PC-9 (cell line): ENCODE measurements at regions of chr2 and their contacts with region 1.

Region 1: GRCh38 chr2:177332041-177332991 is 60.3 kb upstream of the AGPS start:
- DNase-seq: peak; percentile 58
- H3K4me3 ChIP-seq: no peak overlapping the region
- H3K27ac ChIP-seq: no peak overlapping the region
- H3K4me1 ChIP-seq: peaks cover 10% of the 10 kb centered on the region
- H3K27me3 ChIP-seq: no peaks in the 10 kb centered on the region
- CTCF ChIP-seq: peak; percentile 87

Region 2: DNA sequence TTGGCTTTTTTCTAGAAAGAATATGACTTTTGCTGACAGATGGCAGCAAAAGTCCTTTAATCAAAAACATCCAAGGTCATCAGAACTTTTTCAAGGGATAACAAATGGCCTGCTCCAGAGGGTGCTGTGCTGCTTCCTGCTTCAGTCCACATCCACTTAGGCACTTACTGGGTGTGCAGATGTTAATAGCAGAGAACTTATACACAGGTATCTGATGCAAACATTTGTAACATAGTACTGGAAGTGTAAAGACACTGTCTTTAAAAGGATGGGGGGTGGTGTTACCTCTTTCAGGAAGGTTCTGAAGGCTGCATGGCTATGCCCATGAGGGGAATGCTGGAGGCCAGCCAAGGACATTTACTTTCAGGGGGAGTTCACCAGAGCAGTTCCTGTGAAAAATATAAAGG is 1197.3 kb before region 1 on chr2:
- CTCF ChIA-PET with region 1: interaction called, 20 read pairs
- POLR2A ChIA-PET with region 1: interaction called, 5 read pairs
- intact Hi-C with region 1: no loop called
- DNase-seq: no peak
- H3K4me3 ChIP-seq: no peak overlapping the region
- H3K27ac ChIP-seq: no peak overlapping the region
- H3K4me1 ChIP-seq: no peaks in the 10 kb centered on the region
- H3K27me3 ChIP-seq: peaks cover 21% of the 10 kb centered on the region
- CTCF ChIP-seq: no peak; the same call in 1 of the 2 replicates

Region 3: DNA sequence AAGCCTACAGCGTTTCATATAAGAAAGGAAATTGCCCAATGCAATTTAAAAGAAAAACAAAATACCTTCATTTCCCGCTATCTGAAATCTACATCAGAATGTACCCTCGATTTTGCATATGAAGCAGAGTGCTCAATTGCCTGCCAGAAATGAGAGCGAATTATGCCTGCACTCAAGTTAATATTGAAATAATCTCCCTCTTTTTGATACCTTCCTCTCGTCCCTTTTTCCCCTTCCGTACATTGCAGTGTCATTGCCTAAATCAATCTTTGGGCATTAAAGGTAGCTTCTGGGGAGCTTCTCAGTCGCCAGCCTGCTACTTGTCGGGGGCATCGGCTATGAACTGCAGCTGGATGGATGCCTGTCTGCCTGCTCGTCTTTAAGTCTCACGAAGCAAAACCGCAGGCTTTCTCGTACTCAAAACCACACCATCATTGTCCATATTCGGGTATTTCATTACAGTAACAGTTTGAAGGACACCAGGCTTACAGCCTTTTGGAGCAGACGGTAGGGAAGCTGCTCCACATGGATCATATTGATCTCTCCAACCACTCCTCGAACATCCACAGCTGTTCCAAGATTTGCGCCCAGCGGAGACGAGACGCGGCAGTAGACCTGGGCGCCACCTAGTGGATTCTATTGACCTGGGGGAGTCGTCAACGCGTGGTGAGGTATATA is 183.7 kb before region 1 on chr2:
- CTCF ChIA-PET with region 1: interaction called, 6 read pairs
- POLR2A ChIA-PET with region 1: no interaction called
- intact Hi-C with region 1: loop called (anchors 5 kb)
- DNase-seq: peak; percentile 76 to 86
- H3K4me3 ChIP-seq: peak overlapping the region; percentile 46
- H3K27ac ChIP-seq: no peak overlapping the region
- H3K4me1 ChIP-seq: peaks cover 8% of the 10 kb centered on the region
- H3K27me3 ChIP-seq: peaks cover 13% of the 10 kb centered on the region
- CTCF ChIP-seq: peak; percentile 97

Region 4: DNA sequence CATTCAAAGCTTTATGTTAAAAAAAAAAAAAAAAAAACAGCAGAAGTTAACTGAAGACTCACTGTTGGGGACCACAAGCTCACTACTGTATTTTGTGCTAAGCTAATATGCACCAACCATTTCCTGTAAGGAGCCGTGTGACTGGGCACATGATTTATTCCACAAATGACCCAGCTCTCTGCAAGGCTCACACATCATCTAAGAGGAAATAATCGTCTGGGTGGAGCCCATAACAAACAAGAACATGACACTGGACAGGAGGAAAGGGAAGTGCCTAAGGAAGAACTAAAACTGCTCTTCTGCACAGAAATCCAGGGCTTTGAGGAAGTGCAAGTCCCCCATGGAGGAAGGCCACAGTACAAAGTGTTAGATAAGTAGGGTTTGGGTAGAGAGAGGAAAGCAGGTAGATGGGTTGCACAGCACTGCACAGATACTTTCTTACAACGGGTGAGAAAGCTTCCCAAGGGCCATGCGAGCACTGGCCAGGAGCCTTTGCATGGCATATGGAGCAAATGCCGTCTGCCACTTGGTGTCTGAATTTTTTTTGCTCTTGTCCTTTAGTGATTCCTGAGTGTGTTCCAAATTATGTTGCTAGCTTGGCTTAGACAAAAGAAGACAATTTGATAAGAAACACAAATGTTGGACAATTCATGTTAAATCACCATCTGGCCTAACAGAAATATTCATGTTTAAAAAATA is 92.2 kb before region 1 on chr2:
- CTCF ChIA-PET with region 1: no interaction called
- POLR2A ChIA-PET with region 1: no interaction called
- intact Hi-C with region 1: loop called (anchors 5 kb)
- DNase-seq: peak in 1 of 2 experiments; percentile 47
- H3K4me3 ChIP-seq: no peak overlapping the region
- H3K27ac ChIP-seq: peak overlapping the region; percentile 97
- H3K4me1 ChIP-seq: peaks cover 56% of the 10 kb centered on the region
- H3K27me3 ChIP-seq: no peaks in the 10 kb centered on the region
- CTCF ChIP-seq: no peak

Region 5: DNA sequence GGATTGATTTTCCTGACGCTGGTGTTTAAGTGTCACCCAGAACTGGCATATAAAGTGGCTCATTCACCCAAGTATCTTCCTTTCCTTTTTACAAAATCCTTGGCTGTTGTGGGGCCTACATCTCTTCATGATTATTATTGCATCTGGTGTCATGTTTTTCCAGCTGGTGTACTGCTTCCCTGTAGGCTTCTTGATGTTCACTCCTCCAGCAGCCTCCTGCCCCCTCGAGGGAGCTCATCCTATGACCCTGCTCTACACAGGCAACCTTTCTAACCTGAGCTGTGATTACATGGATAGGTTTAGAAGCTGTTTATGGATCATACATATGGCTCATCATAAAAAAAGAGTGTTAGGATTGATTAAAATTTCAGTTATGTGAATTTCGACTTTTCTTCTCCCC is 47.9 kb after region 1 on chr2:
- CTCF ChIA-PET with region 1: no interaction called
- POLR2A ChIA-PET with region 1: no interaction called
- intact Hi-C with region 1: no loop called
- DNase-seq: no peak
- H3K4me3 ChIP-seq: no peak overlapping the region
- H3K27ac ChIP-seq: no peak overlapping the region
- H3K4me1 ChIP-seq: no peaks in the 10 kb centered on the region
- H3K27me3 ChIP-seq: no peaks in the 10 kb centered on the region
- CTCF ChIP-seq: no peak

Region 6: GRCh38 chr2:177489719-177490301 is 157.5 kb after region 1 on chr2:
- CTCF ChIA-PET with region 1: no interaction called
- POLR2A ChIA-PET with region 1: no interaction called
- intact Hi-C with region 1: loop called (anchors 5 kb)
- DNase-seq: no peak
- H3K4me3 ChIP-seq: no peak overlapping the region
- H3K27ac ChIP-seq: no peak overlapping the region
- H3K4me1 ChIP-seq: no peaks in the 10 kb centered on the region
- H3K27me3 ChIP-seq: no peaks in the 10 kb centered on the region
- CTCF ChIP-seq: peak; percentile 88

Region 7: DNA sequence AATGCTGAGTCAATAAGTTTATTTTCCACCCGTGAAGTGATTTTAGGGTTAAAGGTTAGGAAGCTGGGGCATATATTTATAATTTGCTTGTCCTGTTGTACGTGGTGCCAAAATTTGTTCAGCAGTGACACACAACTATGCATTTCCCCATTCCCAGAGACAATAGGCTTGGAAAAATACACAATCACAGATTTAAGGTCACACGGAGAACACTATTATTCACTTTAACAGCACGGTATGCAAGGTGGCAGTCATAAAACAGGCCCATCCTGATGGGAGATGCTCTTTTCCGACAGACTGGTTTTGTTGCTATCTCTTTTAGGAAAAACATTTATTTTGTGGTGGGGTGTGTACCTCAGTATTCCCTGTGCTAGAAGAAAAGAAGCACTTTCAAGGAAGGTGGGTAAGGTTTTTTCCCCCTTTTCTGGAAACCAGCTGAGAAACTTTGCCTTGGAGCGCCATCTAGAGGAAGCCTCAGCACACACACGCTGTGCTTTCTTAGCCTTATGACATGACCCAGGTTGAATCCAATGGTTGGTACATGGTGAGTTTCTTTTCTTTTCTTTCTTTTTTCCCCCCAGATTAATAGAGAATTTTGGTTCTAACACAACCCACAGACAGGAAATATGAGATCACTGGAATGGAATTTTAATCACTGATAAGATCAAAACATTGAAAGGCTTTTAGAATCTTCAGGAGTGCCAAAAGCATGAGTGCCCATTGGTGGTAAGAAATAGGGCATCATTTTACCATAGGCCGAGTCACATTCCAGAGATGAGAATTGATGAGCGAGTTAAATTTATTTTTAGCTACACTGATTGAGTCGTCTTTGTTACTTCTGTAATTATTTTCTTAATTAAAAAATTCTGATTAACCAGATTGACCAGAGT is 392.3 kb after region 1 on chr2:
- CTCF ChIA-PET with region 1: interaction called, 10 read pairs
- POLR2A ChIA-PET with region 1: no interaction called
- intact Hi-C with region 1: loop called (anchors 1 kb)
- DNase-seq: peak in 1 of 2 experiments; percentile 61
- H3K4me3 ChIP-seq: no peak overlapping the region
- H3K27ac ChIP-seq: no peak overlapping the region
- H3K4me1 ChIP-seq: no peaks in the 10 kb centered on the region
- H3K27me3 ChIP-seq: no peaks in the 10 kb centered on the region
- CTCF ChIP-seq: peak; percentile 99

Region 8: GRCh38 chr2:178414266-178415247 is 1082.2 kb after region 1 on chr2:
- CTCF ChIA-PET with region 1: no interaction called
- POLR2A ChIA-PET with region 1: no interaction called
- intact Hi-C with region 1: loop called (anchors 10 kb)
- DNase-seq: peak; percentile 91 to 93
- H3K4me3 ChIP-seq: peak overlapping the region; percentile 72
- H3K27ac ChIP-seq: peak overlapping the region; percentile 55; the same call in 1 of the 2 replicates
- H3K4me1 ChIP-seq: peaks cover 18% of the 10 kb centered on the region
- H3K27me3 ChIP-seq: no peaks in the 10 kb centered on the region
- CTCF ChIP-seq: peak; percentile 99